Activated T-helper 2 cell treated with anti-CD3 and anti-CD28 coated beads, Interferon-gamma antibody, Interleukin-2, Interleukin-4, amounts not matched to agents 10 μg/mL and 5 μg/mL and 100 μg/mL, durations not matched to agents 14 hours and 24 hours and 36 hours (primary cell): ENCODE measurements at regions of chr13 and their contacts with region 1.

Region 1: DNA sequence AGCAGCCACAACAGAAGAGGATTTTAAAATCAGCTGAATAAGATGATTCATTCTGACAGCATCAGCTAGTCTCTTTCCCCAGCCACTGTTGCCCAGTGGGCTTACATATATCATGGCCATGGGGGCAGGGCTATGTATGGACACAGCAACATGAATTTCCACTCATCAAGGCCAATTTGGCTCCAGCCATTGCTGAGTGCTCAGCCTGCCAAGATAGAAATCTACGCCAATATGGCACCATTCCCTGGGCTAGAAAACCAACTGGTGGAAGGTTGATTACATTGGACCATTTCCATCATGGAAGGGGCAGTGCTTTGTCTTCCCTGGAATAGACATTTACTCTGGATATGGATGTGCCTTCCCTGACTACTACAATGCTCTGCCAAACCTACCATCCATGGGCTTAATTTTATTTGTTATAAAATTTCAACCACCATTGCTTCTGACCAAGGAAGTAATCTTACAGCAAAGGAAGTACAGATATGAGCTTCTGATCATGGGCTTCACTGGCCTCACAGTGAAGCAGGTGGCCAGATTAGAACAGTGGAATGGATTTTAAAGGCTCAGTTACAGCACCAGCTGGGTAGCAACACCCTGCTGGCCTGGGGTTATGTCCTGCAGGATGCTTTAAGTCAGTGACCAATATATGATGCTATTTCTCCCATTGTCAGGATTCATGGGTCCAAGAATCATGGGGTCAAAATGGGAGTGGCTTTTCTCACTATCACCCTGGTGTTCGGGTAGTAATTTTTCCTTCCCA is 9.8 kb upstream of the ALOX5AP start:
- DNase-seq: no peak
- H3K4me3 Mint-ChIP-seq: no peak overlapping the region
- H3K27ac Mint-ChIP-seq: no peak overlapping the region
- H3K4me1 Mint-ChIP-seq: peaks cover 14% of the 10 kb centered on the region
- H3K27me3 Mint-ChIP-seq: peaks cover 7% of the 10 kb centered on the region

Region 2: DNA sequence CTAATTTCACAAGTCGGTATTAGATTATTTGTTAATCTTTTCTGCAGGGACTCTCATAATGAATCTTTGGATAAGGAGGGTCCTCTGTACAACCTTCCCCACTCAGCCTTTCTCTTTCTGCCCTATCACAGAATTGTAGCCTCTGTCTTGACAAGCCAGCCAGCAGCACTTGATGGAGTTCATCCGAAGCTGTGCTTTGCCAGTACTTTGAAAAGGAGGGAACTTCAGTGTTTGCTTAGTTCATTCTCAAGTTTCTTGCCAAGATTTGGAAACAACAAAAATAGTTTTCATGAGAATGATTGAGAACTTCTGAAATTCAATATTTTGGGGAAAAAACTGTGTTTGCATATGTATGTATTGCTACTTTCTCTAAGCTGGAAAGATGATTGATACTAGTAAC is 190.5 kb before region 1 on chr13:
- intact Hi-C with region 1: no loop called
- DNase-seq: no peak
- H3K4me3 Mint-ChIP-seq: no peak overlapping the region
- H3K27ac Mint-ChIP-seq: no peak overlapping the region
- H3K4me1 Mint-ChIP-seq: no peaks in the 10 kb centered on the region
- H3K27me3 Mint-ChIP-seq: peaks cover 11% of the 10 kb centered on the region

Region 3: GRCh38 chr13:30685320-30685859 is 40.1 kb before region 1 on chr13:
- intact Hi-C with region 1: loop called (anchors 5 kb)
- DNase-seq: no peak
- H3K4me3 Mint-ChIP-seq: no peak overlapping the region
- H3K27ac Mint-ChIP-seq: no peak overlapping the region
- H3K4me1 Mint-ChIP-seq: peaks cover 3% of the 10 kb centered on the region
- H3K27me3 Mint-ChIP-seq: peaks cover 18% of the 10 kb centered on the region

Region 4: DNA sequence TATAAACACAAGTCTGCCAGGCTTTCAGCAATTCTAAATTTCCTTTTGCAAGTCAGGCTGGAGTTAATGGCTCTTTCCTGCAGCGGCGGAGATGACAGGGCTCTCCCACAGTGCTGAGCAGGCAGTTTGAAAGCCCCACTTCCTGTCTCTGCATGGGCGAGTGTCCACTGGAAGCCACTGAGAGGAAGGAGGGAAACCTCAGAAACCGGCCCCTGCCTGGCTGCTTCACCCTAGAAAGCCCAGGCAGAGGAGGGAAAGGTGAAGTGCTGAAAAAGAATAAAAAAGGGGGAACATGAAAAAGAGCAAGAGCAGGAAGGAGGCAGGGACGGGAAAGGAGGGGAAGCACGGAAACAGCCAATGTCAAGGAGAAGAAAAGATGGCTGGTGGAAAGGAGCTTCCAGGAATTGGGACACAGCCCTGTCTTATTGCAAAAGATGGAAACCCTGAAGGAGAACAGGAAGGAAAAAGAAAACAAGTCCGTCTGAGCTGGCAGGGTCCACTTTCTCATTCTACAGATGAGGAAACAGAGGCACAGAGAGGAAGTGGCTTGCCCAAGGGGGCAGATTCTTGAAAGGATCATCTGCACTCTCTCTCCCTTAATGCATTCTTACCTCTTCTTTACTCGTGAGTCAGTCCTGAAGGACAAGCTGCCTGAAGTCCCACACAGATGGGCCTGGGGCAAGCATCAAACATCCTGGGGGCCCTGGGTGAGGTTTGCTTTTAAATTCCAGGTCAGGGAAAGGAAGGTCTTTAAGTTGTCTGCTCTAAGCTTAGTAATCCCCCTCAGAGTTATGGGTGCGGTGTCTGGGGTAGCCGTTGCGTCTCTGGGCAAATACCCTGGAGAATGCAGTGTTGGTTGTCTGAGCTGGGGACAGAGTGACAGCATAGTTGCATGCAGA is 29.0 kb before region 1 on chr13:
- intact Hi-C with region 1: no loop called
- DNase-seq: no peak
- H3K4me3 Mint-ChIP-seq: peak overlapping the region; percentile 30
- H3K27ac Mint-ChIP-seq: peak overlapping the region; percentile 8
- H3K4me1 Mint-ChIP-seq: peaks cover 25% of the 10 kb centered on the region
- H3K27me3 Mint-ChIP-seq: peaks cover 43% of the 10 kb centered on the region

Region 5: GRCh38 chr13:30711375-30711774 is 14.1 kb before region 1 on chr13:
- intact Hi-C with region 1: loop called (anchors 2 kb)
- DNase-seq: no peak
- H3K4me3 Mint-ChIP-seq: no peak overlapping the region
- H3K27ac Mint-ChIP-seq: no peak overlapping the region
- H3K4me1 Mint-ChIP-seq: peaks cover 22% of the 10 kb centered on the region
- H3K27me3 Mint-ChIP-seq: peaks cover 5% of the 10 kb centered on the region